ENCODE measurements at regions of chr7 and their contacts with region 1.

Region 1: DNA sequence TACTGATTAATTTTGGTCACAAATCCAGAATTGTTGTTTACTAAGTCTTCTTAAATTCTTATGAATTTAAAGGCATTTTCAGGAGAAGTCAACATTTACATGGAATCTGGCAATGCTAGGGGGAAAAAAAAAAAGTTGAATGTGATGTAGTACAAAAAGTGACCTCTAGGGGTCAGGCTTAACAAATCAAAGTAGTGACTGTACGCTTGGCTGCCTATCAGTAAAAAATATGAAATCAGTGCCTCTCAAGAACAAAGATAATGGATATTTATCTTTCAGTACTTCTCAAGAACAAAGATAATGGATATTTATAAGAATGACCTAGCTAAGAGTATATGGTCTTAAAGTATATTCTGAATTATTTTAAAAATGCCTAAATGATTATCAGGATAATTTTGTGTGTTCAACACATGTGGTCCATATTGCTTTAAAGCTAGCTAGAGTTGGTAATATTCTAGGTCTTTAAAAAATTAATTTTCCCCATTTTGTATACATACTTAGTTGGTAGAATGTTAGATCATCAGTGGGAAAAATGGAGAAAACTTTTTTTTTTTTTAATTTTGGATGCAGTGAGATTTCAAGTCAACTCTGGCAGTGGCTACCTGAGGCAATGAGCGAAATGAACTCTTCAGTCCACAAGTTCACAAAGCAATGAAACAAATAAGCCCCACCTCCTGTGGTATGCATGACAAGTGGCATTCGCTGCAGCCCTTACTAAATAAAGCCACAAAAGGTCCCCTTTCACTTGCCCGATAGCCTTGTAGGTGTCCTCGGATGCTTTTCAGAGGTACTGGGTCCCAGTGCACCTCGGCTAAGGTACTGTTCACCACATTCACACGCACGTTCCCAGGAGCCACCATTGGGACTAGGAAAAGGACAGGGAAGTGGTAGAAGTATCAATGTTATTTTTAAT is 51.2 kb upstream of the LAMB4 start:
- DNase-seq: peak; percentile 75
- H3K4me3 ChIP-seq: no peak overlapping the region
- CTCF ChIP-seq: peak; percentile 56

Region 2: DNA sequence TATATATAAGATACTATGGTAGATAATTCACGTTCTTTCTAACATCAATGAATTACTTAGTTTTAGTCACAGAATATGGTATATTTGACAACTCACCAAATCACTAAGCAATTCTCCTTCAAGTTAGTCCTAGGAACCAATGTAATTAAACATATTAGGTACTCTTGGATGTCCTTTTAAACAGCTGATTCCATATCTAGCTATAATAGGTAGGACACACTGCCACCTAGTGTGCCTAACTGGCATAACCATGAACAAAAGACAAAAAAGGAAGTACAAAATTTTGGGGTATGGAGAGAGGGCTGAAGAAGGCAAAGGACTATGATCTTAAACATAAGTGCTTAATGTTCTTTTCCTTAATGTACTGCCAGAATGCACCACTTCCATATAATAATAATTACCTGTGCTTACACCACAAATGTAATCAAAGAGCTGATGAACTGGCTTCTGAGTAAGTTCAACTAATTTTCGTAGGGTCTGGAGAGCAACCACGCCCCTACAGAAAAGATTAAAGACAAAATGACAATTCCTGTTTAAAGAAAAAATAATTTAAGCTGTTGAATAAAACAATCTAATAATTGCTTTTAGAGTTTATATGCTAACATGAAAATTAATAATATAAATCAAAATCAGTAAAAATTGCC is 315.9 kb after region 1 on chr7:
- in situ Hi-C with region 1: loop called (anchors 25 kb)
- DNase-seq: peak; percentile 59
- H3K4me3 ChIP-seq: no peak overlapping the region
- CTCF ChIP-seq: peak; percentile 81

Measured in astrocyte of the spinal cord (primary cell).